HCT116 (cell line): ENCODE measurements at regions of chr11 and their contacts with region 1.

Region 1: GRCh38 chr11:67572747-67573419 is 10.7 kb upstream of the GSTP1 start:
- DNase-seq: peak; percentile 65
- ATAC-seq: peak; percentile 91
- H3K4me3 ChIP-seq: no peak overlapping the region
- H3K27ac ChIP-seq: no peak overlapping the region
- H3K4me1 ChIP-seq: peaks cover 0 to 3% of the 10 kb centered on the region in 2 experiments; a peak in 1 of 4 replicates
- H3K27me3 ChIP-seq: no peaks in the 10 kb centered on the region
- CTCF ChIP-seq: peak; percentile 62 to 90 (median 84)
- POLR2A ChIP-seq: no peak
- RAD21 ChIP-seq: peak; percentile 87

Region 2: DNA sequence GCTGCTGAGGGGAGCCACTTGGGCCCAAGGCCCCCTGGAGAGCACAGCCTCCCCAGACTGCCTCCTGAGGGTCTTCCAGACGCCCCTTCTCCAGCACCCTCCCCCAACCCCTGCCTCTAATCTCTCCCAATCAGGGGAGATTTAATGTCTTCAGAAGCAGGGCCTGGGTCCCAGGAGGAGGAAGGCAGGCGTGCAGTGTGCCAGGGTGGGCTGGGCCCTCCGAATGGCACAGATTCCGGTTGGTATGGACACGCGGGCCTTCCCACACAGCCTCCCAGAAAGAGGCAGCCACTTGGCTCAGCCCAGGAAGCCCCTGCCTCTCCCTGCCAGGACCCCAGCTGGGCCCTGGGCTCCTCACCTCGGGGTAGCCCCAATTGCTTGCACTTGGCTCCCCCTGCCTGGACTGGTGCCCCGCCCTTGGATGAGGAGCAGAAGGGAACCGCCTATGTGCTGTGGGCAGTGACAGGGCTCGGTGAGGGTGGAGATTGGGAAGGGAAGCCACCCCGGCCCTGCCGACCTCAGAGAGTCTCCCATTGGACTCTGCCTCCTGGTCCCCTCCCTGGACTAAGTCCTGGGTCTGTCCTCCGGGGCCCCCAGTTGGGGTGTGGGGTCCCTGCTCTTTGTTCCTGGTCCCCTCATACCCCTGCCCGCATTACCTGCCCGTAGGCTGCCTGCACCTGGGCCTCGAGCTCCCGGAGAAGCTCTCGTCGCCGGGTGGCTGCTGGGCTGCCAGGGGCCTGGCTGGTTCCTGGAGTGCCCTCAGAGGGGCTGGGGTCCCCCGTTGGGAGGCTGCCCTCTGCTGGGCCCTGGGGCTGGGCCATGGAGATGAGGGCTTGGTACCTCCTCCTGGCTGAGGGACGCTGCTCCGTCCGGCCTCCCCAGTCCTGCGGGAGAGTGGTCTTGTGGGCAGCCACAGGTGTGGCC is 49.1 kb before region 1 on chr11:
- CTCF ChIA-PET with region 1: no interaction called
- POLR2A ChIA-PET with region 1: no interaction called
- RAD21 ChIA-PET with region 1: no interaction called
- intact Hi-C with region 1: no loop called
- DNase-seq: no peak
- ATAC-seq: peak; percentile 36; the same call in 1 of the 2 replicates
- H3K4me3 ChIP-seq: no peak overlapping the region
- H3K27ac ChIP-seq: no peak overlapping the region
- H3K4me1 ChIP-seq: peaks cover 0 to 4% of the 10 kb centered on the region in 2 experiments; a peak in 1 of 4 replicates
- H3K27me3 ChIP-seq: no peaks in the 10 kb centered on the region
- CTCF ChIP-seq: no peak
- POLR2A ChIP-seq: no peak
- RAD21 ChIP-seq: no peak

Region 3: DNA sequence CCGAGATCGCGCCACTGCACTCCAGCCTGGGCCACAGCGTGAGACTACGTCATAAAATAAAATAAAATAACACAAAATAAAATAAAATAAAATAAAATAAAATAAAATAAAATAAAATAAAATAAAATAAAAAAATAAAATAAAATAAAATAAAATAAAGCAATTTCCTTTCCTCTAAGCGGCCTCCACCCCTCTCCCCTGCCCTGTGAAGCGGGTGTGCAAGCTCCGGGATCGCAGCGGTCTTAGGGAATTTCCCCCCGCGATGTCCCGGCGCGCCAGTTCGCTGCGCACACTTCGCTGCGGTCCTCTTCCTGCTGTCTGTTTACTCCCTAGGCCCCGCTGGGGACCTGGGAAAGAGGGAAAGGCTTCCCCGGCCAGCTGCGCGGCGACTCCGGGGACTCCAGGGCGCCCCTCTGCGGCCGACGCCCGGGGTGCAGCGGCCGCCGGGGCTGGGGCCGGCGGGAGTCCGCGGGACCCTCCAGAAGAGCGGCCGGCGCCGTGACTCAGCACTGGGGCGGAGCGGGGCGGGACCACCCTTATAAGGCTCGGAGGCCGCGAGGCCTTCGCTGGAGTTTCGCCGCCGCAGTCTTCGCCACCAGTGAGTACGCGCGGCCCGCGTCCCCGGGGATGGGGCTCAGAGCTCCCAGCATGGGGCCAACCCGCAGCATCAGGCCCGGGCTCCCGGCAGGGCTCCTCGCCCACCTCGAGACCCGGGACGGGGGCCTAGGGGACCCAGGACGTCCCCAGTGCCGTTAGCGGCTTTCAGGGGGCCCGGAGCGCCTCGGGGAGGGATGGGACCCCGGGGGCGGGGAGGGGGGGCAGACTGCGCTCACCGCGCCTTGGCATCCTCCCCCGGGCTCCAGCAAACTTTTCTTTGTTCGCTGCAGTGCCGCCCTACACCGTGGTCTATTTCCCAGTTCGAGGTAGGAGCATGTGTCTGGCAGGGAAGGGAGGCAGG is 10.6 kb after region 1 on chr11 and contains the start of gene GSTP1:
- CTCF ChIA-PET with region 1: interaction called, 24 read pairs
- POLR2A ChIA-PET with region 1: interaction called, 8 read pairs
- RAD21 ChIA-PET with region 1: no interaction called
- intact Hi-C with region 1: no loop called
- DNase-seq: peak; percentile 61
- ATAC-seq: peak; percentile 88
- H3K4me3 ChIP-seq: peak within 1 kb of the TSS; percentile 66 to 90
- H3K27ac ChIP-seq: peak within 1 kb of the TSS; percentile 80
- H3K4me1 ChIP-seq: peaks cover 41 to 53% of the 10 kb centered on the region in 2 experiments
- H3K27me3 ChIP-seq: no peaks in the 10 kb centered on the region
- CTCF ChIP-seq: peak; percentile 46 to 65 (median 55)
- POLR2A ChIP-seq: peak; percentile 97
- RAD21 ChIP-seq: peak; percentile 32; the same call in 1 of the 2 replicates
- total RNA-seq, gene GSTP1: 893 TPM

Region 4: GRCh38 chr11:67593565-67593905 is 20.7 kb after region 1 on chr11:
- CTCF ChIA-PET with region 1: no interaction called
- POLR2A ChIA-PET with region 1: no interaction called
- RAD21 ChIA-PET with region 1: no interaction called
- intact Hi-C with region 1: no loop called
- DNase-seq: no peak
- ATAC-seq: no peak
- H3K4me3 ChIP-seq: no peak overlapping the region
- H3K27ac ChIP-seq: no peak overlapping the region
- H3K4me1 ChIP-seq: no peaks in the 10 kb centered on the region
- H3K27me3 ChIP-seq: no peaks in the 10 kb centered on the region
- CTCF ChIP-seq: no peak
- POLR2A ChIP-seq: no peak
- RAD21 ChIP-seq: no peak